SK-N-SH (cell line): ENCODE measurements at regions of chr7 and their contacts with region 1.

Region 1: GRCh38 chr7:77657427-77658224 is 38.6 kb upstream of the RSBN1L start:
- DNase-seq: peak; percentile 64
- H3K4me3 ChIP-seq: no peak overlapping the region
- H3K27ac ChIP-seq: no peak overlapping the region
- H3K4me1 ChIP-seq: no peaks in the 10 kb centered on the region
- H3K27me3 ChIP-seq: no peaks in the 10 kb centered on the region
- CTCF ChIP-seq: peak; percentile 88
- EP300 ChIP-seq: no peak
- RAD21 ChIP-seq: peak; percentile 96

Region 2: GRCh38 chr7:77674878-77675277 is 17.3 kb after region 1 on chr7:
- CTCF ChIA-PET with region 1: interaction called, 15 read pairs
- POLR2A ChIA-PET with region 1: no interaction called
- DNase-seq: no peak
- H3K4me3 ChIP-seq: no peak overlapping the region
- H3K27ac ChIP-seq: no peak overlapping the region
- H3K4me1 ChIP-seq: no peaks in the 10 kb centered on the region
- H3K27me3 ChIP-seq: no peaks in the 10 kb centered on the region
- CTCF ChIP-seq: no peak
- EP300 ChIP-seq: no peak
- RAD21 ChIP-seq: no peak